Activated CD8-positive, alpha-beta T cell treated with anti-CD3 and anti-CD28 coated beads, Interleukin-2, amount 10 ng/mL, durations not matched to agents 7 days and 5 days (primary cell): ENCODE measurements at regions of chr1 and their contacts with region 1.

Region 1: DNA sequence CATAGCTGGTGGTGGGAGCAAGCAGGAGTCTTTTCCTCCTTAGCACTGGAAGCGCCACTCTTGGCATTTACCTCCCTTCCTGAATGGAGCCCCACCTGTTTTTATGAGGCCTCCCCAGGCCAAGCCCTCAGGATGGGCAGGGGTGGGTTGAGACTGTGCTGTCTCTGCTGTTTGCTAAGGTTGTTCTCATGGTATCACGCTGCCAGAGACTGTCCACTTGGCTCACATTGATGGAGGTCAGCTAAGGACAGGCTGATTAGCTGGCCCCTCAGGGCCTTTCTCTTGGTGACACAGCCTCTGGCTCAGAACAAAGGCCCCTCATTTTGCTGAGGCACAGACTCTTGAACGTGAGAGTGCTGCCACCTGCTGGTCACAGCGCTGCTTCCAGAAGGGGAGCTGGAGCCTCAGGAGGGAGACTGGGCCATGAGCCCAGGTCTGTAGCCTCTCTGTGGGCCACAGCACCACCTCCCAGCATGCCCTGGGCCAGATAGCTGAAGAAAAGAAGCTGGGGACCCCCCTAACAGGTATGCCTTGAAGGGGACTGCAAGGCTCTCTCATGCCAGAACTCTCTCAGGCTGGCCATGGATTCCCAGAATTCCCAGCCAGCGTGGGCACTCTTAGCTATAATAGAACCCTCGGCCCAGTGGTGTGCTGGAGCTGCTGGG is 85.6 kb downstream of the CD58 start:
- DNase-seq: peak; percentile 91
- ATAC-seq: peak; percentile 96
- H3K4me3 Mint-ChIP-seq: no peak overlapping the region
- H3K27ac Mint-ChIP-seq: no peak overlapping the region
- H3K4me1 Mint-ChIP-seq: peaks cover 4% of the 10 kb centered on the region
- H3K27me3 Mint-ChIP-seq: peaks cover 7% of the 10 kb centered on the region

Region 2: DNA sequence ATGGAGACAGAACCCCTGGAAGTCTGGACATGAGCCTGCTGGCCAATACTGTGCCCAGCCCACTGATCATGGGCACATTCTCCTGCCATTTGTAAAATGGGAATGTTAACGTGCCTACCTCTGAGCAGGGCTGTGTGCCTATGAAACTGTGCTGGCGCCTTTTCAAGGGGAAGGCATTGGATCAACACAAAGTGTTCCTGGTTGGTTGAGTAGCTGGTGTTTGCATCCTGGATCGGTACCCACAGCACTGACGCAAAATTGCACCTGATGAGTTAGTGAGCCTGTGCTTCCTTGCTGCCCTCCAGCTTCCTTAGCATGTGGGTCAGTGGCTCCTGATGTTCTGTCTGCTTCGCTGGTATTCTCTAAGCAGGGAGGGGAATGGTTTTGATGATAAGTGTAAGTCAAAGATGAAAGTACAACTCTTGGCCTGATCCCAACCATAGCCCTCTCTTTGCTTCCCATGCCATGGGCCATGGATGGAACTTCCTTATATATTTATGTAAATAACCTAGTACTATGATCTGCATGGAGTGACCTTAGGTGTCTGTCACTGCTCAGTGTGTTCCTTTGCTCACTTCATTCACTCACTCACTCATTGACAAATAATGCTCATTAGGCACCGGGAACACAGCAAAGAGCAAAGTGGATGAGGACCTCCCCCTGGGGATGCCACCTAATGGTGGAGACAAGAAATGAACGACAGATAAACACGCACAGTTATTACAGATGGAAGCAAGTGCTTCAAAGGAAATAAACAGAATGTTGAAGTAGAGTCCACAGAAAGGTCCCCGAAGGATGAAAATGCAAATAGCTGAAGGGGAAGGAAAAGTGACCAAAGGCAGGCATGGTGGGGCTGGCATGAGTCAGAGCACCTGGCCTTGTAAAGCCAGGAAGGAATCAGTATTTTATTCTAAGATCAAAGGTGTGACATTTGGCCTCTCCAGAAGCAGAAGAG is 351.2 kb before region 1 on chr1:
- CTCF ChIA-PET with region 1: interaction called, 429 read pairs
- POLR2A ChIA-PET with region 1: interaction called, 10 read pairs
- DNase-seq: peak; percentile 21
- ATAC-seq: no peak
- H3K4me3 Mint-ChIP-seq: no peak overlapping the region
- H3K27ac Mint-ChIP-seq: no peak overlapping the region
- H3K4me1 Mint-ChIP-seq: peaks cover 17% of the 10 kb centered on the region
- H3K27me3 Mint-ChIP-seq: peaks cover 8% of the 10 kb centered on the region

Region 3: DNA sequence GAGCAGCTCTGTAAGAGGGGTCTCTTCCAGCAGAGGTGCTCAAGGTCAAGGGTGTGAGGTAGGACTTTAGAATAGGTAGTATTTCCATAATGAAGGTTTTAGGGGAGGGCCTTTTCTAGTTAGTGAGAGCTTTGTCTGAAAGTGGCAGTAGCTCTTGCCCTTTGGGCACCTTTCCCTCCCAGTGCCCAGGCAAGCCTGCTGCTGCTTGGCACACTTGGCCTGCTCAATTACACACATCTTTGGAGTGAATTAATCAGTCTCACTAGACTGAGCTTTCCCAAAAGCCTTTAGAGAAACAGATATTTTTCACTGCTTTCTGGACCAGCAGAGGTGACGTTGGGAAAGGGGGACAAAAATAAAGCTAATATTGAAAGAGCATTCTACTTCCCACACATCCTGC is 326.0 kb before region 1 on chr1:
- CTCF ChIA-PET with region 1: interaction called, 14 read pairs
- POLR2A ChIA-PET with region 1: no interaction called
- DNase-seq: peak; percentile 11
- ATAC-seq: no peak
- H3K4me3 Mint-ChIP-seq: no peak overlapping the region
- H3K27ac Mint-ChIP-seq: no peak overlapping the region
- H3K4me1 Mint-ChIP-seq: no peaks in the 10 kb centered on the region
- H3K27me3 Mint-ChIP-seq: peaks cover 25% of the 10 kb centered on the region

Region 4: GRCh38 chr1:116377541-116378529 is 107.4 kb before region 1 on chr1:
- CTCF ChIA-PET with region 1: interaction called, 15 read pairs
- POLR2A ChIA-PET with region 1: no interaction called
- DNase-seq: peak; percentile 57
- ATAC-seq: peak; percentile 52
- H3K4me3 Mint-ChIP-seq: peak overlapping the region; percentile 92
- H3K27ac Mint-ChIP-seq: peak overlapping the region; percentile 94
- H3K4me1 Mint-ChIP-seq: peaks cover 74% of the 10 kb centered on the region
- H3K27me3 Mint-ChIP-seq: no peaks in the 10 kb centered on the region

Region 5: DNA sequence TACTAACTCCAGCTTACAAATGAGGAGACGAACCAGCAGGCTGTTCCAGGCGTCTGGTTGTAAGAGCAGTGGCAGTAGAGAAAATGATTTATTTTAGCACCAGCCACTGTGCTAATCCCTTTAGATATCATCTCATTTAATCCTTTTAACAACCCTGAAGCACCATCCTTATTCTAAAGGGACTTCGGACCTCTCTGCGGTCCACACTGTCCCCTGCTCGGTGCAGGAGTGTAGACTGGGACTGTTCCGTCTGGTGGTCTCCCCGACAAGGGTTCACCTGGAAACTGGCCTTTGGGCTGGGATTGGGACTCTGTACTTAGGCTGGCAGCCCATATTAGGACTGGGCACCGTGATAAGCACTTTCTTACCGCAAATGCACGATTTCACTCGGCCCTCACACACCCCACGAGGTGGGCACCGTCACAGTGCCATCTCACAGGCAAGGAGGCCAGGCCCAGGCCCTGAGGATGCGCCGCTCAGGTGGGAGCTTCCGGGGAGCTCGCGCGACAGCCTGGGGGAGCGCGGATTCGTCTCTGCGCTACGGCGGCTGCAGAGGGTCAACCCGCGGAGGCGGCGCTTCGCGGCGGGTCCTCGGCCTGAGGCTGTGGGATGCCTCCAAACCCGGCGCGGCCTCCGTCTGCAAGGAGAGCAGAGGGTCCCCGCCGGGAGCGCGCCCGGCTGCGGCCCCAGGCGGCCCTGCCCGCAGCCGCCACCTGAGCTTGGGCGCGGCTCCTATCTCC is 66.9 kb before region 1 on chr1:
- CTCF ChIA-PET with region 1: interaction called, 15 read pairs
- POLR2A ChIA-PET with region 1: no interaction called
- DNase-seq: peak; percentile 90
- ATAC-seq: peak; percentile 94
- H3K4me3 Mint-ChIP-seq: peak overlapping the region; percentile 90
- H3K27ac Mint-ChIP-seq: peak overlapping the region; percentile 92
- H3K4me1 Mint-ChIP-seq: peaks cover 68% of the 10 kb centered on the region
- H3K27me3 Mint-ChIP-seq: peaks cover 7% of the 10 kb centered on the region

Region 6: GRCh38 chr1:116472431-116472961 is 12.7 kb before region 1 on chr1:
- CTCF ChIA-PET with region 1: interaction called, 15 read pairs
- POLR2A ChIA-PET with region 1: no interaction called
- DNase-seq: no peak
- ATAC-seq: no peak
- H3K4me3 Mint-ChIP-seq: no peak overlapping the region
- H3K27ac Mint-ChIP-seq: no peak overlapping the region
- H3K4me1 Mint-ChIP-seq: no peaks in the 10 kb centered on the region
- H3K27me3 Mint-ChIP-seq: peaks cover 2% of the 10 kb centered on the region

Region 7: DNA sequence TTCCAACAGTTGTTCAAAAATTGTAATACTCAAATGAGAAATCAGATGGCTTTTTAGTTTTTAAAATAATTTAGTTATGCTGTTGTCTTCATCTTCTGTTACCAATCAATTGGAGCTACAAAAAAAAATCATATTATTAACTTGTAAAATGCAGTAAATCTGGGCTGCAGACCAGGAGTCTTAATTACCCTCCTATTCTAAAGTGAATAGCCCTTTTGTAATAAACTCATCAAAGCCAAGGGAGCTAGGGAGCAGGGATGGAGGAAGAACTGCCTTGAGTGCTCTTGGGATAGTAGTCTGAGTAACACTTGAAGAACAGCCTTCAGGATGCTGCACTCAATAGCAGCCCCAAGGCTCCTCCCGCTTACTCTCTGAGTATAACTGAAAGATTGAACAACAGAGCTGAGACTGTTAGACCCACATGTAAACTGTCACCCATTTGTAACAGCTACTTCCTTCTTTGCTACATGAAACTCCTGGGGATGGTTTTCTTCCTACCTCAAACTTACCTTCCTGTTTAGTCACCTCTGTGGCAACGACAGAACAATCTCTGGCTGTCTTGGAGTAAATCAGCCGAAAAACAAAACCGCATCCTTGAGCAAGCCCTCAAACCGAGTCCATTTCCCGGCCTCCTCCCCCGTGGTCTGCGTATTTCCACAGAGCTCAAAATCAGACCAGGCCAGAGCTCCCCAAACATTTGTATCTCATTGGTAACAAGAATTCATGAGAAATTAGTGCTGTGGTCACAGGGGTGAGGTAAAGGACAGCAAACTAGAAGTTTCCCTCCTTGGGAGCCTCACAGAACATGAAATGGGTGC is 29.7 kb after region 1 on chr1:
- CTCF ChIA-PET with region 1: interaction called, 10 read pairs
- POLR2A ChIA-PET with region 1: no interaction called
- DNase-seq: peak; percentile 76
- ATAC-seq: peak; percentile 84
- H3K4me3 Mint-ChIP-seq: peak overlapping the region; percentile 57
- H3K27ac Mint-ChIP-seq: peak overlapping the region; percentile 89
- H3K4me1 Mint-ChIP-seq: peaks cover 78% of the 10 kb centered on the region
- H3K27me3 Mint-ChIP-seq: no peaks in the 10 kb centered on the region

Region 8: DNA sequence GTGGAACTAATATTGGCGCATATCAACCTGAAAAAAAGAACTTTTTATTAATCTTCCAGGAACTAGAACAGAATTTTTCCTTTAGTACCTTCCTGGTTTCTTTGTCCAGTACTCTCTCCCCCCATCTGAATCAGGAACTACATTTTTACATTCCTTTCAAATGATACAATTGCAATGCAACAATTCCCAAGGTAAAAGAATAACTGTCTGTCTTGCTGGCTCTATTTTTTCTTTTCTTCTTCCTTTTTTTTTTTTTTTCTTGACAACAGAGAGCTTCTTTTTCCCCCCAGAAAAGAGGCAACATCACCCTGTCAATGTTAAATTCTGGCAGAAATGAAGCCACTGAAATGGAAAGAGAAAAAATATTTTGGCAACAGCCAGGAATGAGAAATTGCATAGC is 511.9 kb after region 1 on chr1:
- CTCF ChIA-PET with region 1: no interaction called
- POLR2A ChIA-PET with region 1: no interaction called
- DNase-seq: no peak
- ATAC-seq: no peak
- H3K4me3 Mint-ChIP-seq: no peak overlapping the region
- H3K27ac Mint-ChIP-seq: no peak overlapping the region
- H3K4me1 Mint-ChIP-seq: peaks cover 26% of the 10 kb centered on the region
- H3K27me3 Mint-ChIP-seq: no peaks in the 10 kb centered on the region